A549 (cell line): ENCODE measurements at regions of chr16 and their contacts with region 1.

Region 1: DNA sequence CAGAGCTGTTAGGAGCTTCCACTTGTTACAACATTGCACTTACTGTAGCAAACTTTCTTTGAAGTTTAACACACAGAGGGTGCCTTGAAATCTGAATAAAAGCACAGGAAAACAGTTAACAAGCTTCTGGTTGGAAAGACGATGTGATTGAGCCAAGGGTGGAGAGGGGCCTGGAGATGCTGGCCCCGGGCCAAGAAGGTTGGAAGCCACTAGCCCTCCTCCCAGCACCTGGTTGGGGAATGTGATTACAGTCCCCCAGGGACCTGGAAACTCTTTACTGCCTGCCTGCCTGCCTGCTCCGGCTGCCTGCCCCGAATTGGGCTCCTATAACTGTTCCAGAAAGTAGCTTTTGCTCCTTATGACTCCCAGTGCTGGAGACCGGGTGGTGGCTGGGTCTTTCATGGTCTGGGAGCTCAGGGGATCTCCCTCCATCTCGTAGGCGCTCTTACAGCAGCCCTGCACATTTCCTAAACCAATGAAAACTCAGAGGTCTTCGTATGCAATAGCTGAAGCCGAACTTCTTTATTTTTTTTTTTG is 48.0 kb upstream of the ZFHX3 start:
- DNase-seq: peak in 1 of 2 experiments; percentile 82
- ATAC-seq: peak; percentile 77 to 78
- H3K4me3 ChIP-seq: 0 out of 3 replicates have a peak overlapping the region, but pooled peaks have one; percentile 12
- H3K27ac ChIP-seq: peak overlapping the region; percentile 82 to 85
- H3K4me1 ChIP-seq: peaks cover 36% of the 10 kb centered on the region
- CTCF ChIP-seq: no peak
- EP300 ChIP-seq: no peak
- POLR2A ChIP-seq: no peak
- RAD21 ChIP-seq: no peak; a peak in 1 of 5 replicates

Region 2: GRCh38 chr16:73082608-73083007 is 13.3 kb before region 1 on chr16:
- CTCF ChIA-PET with region 1: interaction called, 5 read pairs
- POLR2A ChIA-PET with region 1: interaction called, 13 read pairs
- DNase-seq: peak in 1 of 2 experiments; percentile 87
- ATAC-seq: peak; percentile 95 to 98
- H3K4me3 ChIP-seq: no peak overlapping the region
- H3K27ac ChIP-seq: peak overlapping the region; percentile 72 to 79
- H3K4me1 ChIP-seq: peaks cover 15% of the 10 kb centered on the region
- CTCF ChIP-seq: no peak
- EP300 ChIP-seq: peak; percentile 65 to 74; a peak in 2 of 5 replicates
- POLR2A ChIP-seq: no peak
- RAD21 ChIP-seq: peak in 1 of 2 experiments; percentile 1; a peak in 2 of 5 replicates

Region 3: GRCh38 chr16:73113336-73113735 is 17.4 kb after region 1 on chr16:
- CTCF ChIA-PET with region 1: no interaction called
- POLR2A ChIA-PET with region 1: no interaction called
- DNase-seq: no peak
- ATAC-seq: no peak
- H3K4me3 ChIP-seq: no peak overlapping the region
- H3K27ac ChIP-seq: no peak overlapping the region
- H3K4me1 ChIP-seq: no peaks in the 10 kb centered on the region
- CTCF ChIP-seq: no peak
- EP300 ChIP-seq: no peak
- POLR2A ChIP-seq: no peak
- RAD21 ChIP-seq: no peak